Activated T-helper 2 cell treated with anti-CD3 and anti-CD28 coated beads, Interferon-gamma antibody, Interleukin-2, Interleukin-4, amounts not matched to agents 10 μg/mL and 5 μg/mL and 100 μg/mL, durations not matched to agents 14 hours and 24 hours and 36 hours (primary cell): ENCODE measurements at regions of chr10 and their contacts with region 1.

Region 1: DNA sequence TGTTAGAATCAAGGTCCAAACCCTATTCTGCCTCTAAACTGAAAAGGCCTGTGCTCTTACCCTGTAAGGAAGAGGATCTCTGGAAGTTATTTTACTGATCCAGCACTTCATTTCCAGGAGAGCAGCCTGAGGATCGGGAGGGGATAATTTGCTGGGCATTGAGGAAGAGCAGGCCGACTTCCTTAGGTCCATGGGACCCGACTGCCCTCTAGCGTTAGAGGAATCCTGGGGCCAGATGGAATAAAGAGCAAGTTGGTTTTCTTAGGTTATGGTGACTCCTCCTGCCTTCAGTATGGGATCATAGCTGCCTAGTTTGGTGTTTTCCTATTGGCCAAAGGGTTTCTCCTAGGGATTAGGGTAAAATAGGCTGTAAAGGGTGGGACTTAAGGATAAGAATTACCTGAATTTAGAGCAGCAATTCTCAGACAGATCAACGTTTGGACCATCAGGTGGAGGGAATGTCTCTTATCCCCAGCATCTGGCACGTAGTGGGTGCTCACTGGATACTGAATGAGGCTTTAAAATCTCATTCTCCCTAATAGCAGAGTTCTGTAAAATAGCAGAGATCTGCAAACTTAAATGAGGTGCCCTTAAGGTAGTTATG is 40.0 kb upstream of the SORBS1 start:
- DNase-seq: peak; percentile 20
- H3K4me3 Mint-ChIP-seq: no peak overlapping the region
- H3K27ac Mint-ChIP-seq: no peak overlapping the region
- H3K4me1 Mint-ChIP-seq: no peaks in the 10 kb centered on the region
- H3K27me3 Mint-ChIP-seq: peaks cover 10% of the 10 kb centered on the region

Region 2: DNA sequence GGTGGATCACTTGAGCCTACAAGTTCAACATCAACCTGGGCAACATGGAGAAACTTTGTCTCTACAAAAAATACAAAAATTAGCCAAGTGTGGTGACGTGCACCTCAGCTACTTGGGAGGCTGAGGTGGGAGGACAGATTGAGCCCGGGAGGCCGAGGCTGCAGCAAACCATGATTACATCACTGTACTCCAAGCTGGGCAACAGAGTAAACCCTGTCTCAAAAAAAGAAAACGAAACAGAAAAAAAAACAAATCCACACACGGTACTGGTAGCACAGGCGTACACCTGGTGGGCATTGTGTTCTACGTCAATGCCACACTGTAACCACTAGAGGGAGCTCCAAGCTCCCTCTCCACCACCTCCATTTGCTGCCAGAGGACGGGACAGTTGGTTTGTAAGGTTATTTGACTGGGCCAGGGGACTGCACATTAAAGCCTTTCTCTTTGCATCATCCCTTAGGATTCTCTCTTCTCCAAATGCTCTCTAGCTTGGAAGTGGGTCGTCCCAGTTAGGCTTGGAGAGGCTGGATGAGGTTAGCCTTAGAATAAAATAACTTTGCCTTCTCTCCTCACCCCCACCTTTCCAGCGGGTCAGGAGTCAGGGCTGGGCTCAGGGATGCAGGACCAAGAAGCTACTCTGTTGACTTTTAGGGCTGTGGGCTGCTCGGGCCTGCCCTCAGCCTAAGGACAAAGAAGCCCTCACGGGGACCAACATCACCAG is 170.8 kb before region 1 on chr10:
- intact Hi-C with region 1: loop called (anchors 1 kb)
- DNase-seq: peak; percentile 23
- H3K4me3 Mint-ChIP-seq: no peak overlapping the region
- H3K27ac Mint-ChIP-seq: no peak overlapping the region
- H3K4me1 Mint-ChIP-seq: no peaks in the 10 kb centered on the region
- H3K27me3 Mint-ChIP-seq: peaks cover 19% of the 10 kb centered on the region

Region 3: GRCh38 chr10:95920798-95921426 is 319.7 kb after region 1 on chr10:
- intact Hi-C with region 1: no loop called
- DNase-seq: no peak
- H3K4me3 Mint-ChIP-seq: no peak overlapping the region
- H3K27ac Mint-ChIP-seq: no peak overlapping the region
- H3K4me1 Mint-ChIP-seq: no peaks in the 10 kb centered on the region
- H3K27me3 Mint-ChIP-seq: peaks cover 10% of the 10 kb centered on the region